ENCODE measurements at regions of chr3 and their contacts with region 1.

Region 1: GRCh38 chr3:31917303-31918005 is 63.6 kb downstream of the OSBPL10 start:
- DNase-seq: no peak
- H3K4me3 ChIP-seq: no peak overlapping the region
- H3K27ac ChIP-seq: no peak overlapping the region
- H3K4me1 ChIP-seq: peaks cover 18% of the 10 kb centered on the region
- H3K27me3 ChIP-seq: no peaks in the 10 kb centered on the region
- CTCF ChIP-seq: no peak

Region 2: DNA sequence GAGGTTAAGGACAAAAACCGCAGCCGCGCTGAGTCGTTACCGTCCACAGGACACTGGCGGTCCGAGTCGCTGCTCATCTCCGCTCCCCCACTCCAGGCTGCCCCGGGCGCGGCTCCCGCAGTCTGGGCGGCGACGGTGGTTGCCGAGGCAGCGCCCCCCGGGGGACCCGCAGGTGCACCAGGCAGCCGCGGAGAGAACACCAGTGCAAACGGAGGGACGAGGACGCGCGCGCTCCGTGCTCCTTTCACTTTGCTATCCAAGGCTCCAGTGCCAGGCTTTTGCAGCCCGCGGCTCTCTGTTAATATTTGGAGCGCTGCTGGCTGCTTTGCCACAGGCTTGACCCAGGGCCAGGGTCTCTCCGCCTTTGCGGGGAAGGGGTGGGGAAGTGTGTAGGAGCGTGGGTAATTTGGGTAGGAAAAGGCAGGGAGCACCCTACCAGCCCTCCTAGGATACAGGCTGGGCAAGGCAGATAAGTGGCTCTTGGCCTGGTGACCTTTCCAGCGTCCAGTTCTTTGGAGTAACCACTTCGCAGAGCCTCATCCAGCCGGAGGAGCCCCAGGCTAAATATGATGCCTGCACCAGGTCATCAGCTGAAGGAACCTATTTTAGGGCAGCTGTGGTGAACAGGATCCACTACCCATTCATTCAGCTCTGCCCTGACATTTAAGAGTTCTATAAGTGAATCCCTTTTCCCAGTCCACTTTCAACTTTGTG is 1022.8 kb before region 1 on chr3 and contains the start of gene GADL1:
- CTCF ChIA-PET with region 1: no interaction called
- dilution Hi-C with region 1: no loop called
- in situ Hi-C with region 1: no loop called
- intact Hi-C with region 1: no loop called
- DNase-seq: peak; percentile 14
- H3K4me3 ChIP-seq: peak within 1 kb of the TSS; percentile 48 to 54 (median 53)
- H3K27ac ChIP-seq: no peak within 1 kb of the TSS
- H3K4me1 ChIP-seq: peaks cover 4% of the 10 kb centered on the region
- H3K27me3 ChIP-seq: peaks cover 30% of the 10 kb centered on the region
- CTCF ChIP-seq: no peak
- total RNA-seq, gene GADL1: not detected

Region 3: DNA sequence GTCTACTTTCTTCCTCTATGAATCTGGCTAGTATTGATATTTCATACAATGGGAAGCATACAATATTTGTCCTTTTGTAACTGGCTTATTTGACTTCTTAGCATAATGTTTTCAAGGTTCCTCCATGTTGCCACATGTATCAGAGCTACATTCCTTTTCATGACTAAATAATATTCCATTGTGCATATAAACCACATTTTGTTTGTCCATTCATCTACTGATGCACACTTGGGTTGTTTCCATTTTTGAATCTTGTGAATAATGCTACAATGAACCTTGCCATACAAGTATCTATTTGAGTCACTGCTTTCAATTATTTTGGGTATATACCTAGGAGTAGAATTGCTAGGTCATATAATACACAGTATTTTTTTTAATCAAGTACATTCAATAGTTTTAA is 25.6 kb after region 1 on chr3:
- CTCF ChIA-PET with region 1: no interaction called
- dilution Hi-C with region 1: no loop called
- in situ Hi-C with region 1: no loop called
- intact Hi-C with region 1: loop called (anchors 1 kb)
- DNase-seq: peak; percentile 51
- H3K4me3 ChIP-seq: no peak overlapping the region
- H3K27ac ChIP-seq: no peak overlapping the region
- H3K4me1 ChIP-seq: peaks cover 32% of the 10 kb centered on the region
- H3K27me3 ChIP-seq: no peaks in the 10 kb centered on the region
- CTCF ChIP-seq: no peak

Measured in mammary epithelial cell (primary cell).